Activated T-helper 1 cell treated with anti-CD3 and anti-CD28 coated beads, Interleukin-12 subunit alpha, Interleukin-12 subunit beta, Interleukin-2, Interleukin-4 antibody, amounts not matched to agents 30 ng/mL and 10 ng/mL and 1 ng/mL, durations not matched to agents 14 hours and 24 hours and 36 hours (primary cell): ENCODE measurements at regions of chr22 and their contacts with region 1.

Region 1: GRCh38 chr22:40094485-40094884 is 83.2 kb upstream of the TNRC6B start:
- DNase-seq: no peak
- H3K4me3 Mint-ChIP-seq: peak overlapping the region; percentile 30
- H3K27ac Mint-ChIP-seq: peak overlapping the region; percentile 21
- H3K4me1 Mint-ChIP-seq: peaks cover 33% of the 10 kb centered on the region
- H3K27me3 Mint-ChIP-seq: no peaks in the 10 kb centered on the region

Region 2: GRCh38 chr22:40107851-40108378 is 13.4 kb after region 1 on chr22:
- intact Hi-C with region 1: loop called (anchors 2 kb)
- DNase-seq: peak; percentile 16
- H3K4me3 Mint-ChIP-seq: peak overlapping the region; percentile 84
- H3K27ac Mint-ChIP-seq: peak overlapping the region; percentile 86
- H3K4me1 Mint-ChIP-seq: peaks cover 43% of the 10 kb centered on the region
- H3K27me3 Mint-ChIP-seq: no peaks in the 10 kb centered on the region